HepG2 (cell line): ENCODE measurements at regions of chr1 and their contacts with region 1.

Region 1: DNA sequence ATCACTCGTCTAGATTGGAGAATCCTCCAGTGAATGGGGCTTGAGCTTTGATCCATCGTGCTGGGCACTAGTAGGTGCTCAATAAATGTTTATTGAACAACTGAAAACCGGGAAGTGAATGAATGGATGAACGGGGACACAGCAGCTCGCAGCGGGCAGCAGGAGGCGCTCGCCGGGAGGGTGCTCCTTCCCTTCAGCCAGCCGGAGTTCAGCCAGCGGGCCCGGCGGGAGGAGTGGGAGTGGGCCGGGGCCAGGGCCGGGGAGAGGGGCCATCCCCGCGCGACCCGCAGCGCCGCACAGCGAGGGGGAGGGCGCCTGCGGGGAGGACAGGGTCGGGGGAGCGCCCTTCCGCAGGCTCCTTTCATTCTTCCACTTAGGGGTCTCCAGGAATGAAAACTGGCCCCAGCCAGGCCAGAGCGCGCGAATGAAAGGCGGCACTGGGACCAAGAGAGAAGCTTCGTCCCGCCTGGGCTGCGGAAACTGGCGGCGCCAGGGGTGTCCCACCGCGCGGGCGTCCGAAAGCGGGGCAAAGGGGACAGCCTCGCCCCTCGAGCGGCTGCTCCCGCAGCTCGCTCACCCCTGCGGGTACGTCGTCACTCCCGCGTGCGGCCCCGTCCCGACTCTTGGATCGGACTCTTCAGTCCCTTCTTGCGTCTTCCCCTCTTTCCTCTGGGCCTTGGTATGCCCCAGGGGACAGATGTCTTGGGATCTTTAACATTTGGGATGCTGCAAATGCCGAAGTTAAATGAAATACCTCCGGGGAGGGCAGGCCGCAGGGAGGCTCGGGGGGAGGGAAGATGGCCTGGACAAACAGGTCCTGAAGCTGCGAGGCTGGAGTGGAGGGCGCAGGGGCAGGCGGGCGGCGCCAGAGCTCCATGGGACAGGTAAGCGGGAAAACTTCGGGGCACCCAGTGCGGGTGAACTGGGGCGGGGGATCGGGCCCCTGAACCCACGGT is 3.6 kb upstream of the INAVA start:
- DNase-seq: peak; percentile 68
- ATAC-seq: peak; percentile 60
- H3K4me3 ChIP-seq: peak overlapping the region; percentile 68 to 82 (median 70)
- H3K27ac ChIP-seq: peak overlapping the region; percentile 92
- H3K4me1 ChIP-seq: peaks cover 91% of the 10 kb centered on the region
- H3K27me3 ChIP-seq: no peaks in the 10 kb centered on the region
- CTCF ChIP-seq: peak; percentile 78
- EP300 ChIP-seq: no peak; a peak in 1 of 4 replicates
- POLR2A ChIP-seq: peak; percentile 16 to 56; a peak in 2 of 4 replicates
- RAD21 ChIP-seq: peak; percentile 68

Region 2: DNA sequence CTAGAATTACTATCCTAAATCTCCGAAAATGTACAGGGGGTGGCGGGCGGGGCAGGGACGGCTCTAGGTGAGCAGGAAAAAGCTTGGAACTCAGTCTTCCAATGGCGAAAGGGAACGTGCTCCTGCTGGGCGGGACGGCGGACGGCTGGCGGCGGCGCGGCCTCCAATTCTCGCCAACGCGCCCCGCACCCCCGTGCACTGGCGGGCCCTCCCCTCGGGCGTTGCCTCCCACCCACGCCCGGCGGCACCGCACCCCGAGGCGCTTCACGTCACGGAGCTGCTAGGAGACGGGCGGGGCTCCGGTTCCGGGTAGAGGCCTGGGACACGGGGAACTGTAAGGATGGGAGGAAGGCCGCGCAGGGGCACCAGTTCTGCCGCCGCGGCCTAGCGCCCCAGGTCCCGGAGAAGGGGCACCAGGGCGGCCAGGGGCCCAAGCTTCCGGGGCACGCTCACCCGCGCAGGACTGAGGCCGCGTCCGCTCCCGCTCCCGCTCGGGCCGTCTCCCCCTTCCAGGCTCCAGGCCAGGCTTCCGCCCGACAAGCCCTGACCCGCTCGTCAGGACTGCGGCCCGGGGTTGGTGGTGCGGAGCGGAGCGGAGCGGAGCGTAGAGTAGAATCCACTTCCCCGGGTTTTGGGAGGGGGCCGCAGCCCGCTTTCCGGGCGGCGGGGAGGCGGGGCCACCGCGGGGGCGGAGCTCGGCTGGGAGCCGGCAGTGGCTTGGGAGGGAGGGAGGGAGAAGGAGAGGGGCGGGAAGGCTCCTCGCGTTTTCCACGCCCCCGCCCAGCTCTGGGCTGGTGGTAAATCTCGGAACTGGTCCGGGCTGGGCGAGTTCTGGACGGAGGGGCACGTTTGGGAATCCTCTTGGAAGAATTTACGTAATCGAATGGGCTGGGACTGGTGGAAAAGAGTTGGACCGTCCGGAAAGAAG is 221.5 kb before region 1 on chr1 and contains the start of gene DDX59:
- CTCF ChIA-PET with region 1: no interaction called
- POLR2A ChIA-PET with region 1: interaction called, 15 read pairs
- in situ Hi-C with region 1: no loop called
- intact Hi-C with region 1: no loop called
- DNase-seq: peak; percentile 94
- ATAC-seq: peak; percentile 93
- H3K4me3 ChIP-seq: peak within 1 kb of the TSS; percentile 86 to 94 (median 87)
- H3K27ac ChIP-seq: peak within 1 kb of the TSS; percentile 98
- H3K4me1 ChIP-seq: peaks cover 18% of the 10 kb centered on the region
- H3K27me3 ChIP-seq: no peaks in the 10 kb centered on the region
- CTCF ChIP-seq: no peak
- EP300 ChIP-seq: peak in 1 of 2 experiments; percentile 24; a peak in 1 of 4 replicates
- POLR2A ChIP-seq: peak; percentile 46 to 85; a peak in 3 of 4 replicates
- RAD21 ChIP-seq: peak; percentile 21; the same call in 1 of the 2 replicates
- total RNA-seq, gene DDX59: 14.8 and 21.7 TPM in 2 replicates

Region 3: GRCh38 chr1:200917291-200917817 is 26.3 kb after region 1 on chr1:
- CTCF ChIA-PET with region 1: no interaction called
- POLR2A ChIA-PET with region 1: interaction called, 10 read pairs
- in situ Hi-C with region 1: no loop called
- intact Hi-C with region 1: no loop called
- DNase-seq: peak; percentile 67
- ATAC-seq: peak; percentile 88
- H3K4me3 ChIP-seq: peak overlapping the region in 1 of 3 experiments; percentile 41; a peak in 2 of 6 replicates
- H3K27ac ChIP-seq: no peak overlapping the region
- H3K4me1 ChIP-seq: peaks cover 27% of the 10 kb centered on the region
- H3K27me3 ChIP-seq: no peaks in the 10 kb centered on the region
- CTCF ChIP-seq: peak; percentile 22; the same call in 1 of the 2 replicates
- EP300 ChIP-seq: no peak
- POLR2A ChIP-seq: no peak
- RAD21 ChIP-seq: no peak; the same call in 1 of the 2 replicates

Region 4: DNA sequence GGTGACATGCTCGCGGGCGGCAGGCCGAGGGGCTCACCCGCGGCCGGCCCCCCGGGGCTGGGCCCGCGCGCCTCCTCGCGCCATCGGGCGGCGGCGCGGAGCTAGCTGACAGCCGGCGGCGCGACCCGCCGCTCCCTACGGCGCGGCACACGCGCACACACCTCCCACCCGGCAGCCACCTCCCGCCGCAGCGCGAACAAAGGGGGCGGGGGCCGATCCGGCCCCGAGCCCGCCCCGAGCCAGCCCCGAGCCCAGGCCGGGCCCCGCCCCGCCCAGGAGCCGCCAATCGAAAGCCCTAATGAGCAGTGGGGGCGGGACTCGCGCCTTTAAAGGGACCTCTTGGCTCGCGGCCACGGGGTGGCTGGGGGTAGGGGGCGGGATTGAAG is 132.4 kb after region 1 on chr1 and contains the start of gene KIF21B:
- CTCF ChIA-PET with region 1: no interaction called
- POLR2A ChIA-PET with region 1: interaction called, 3 read pairs
- in situ Hi-C with region 1: no loop called
- intact Hi-C with region 1: loop called (anchors 5 kb)
- DNase-seq: peak; percentile 42
- ATAC-seq: peak; percentile 86
- H3K4me3 ChIP-seq: peak within 1 kb of the TSS; percentile 40 to 68 (median 55); a peak in 5 of 6 replicates
- H3K27ac ChIP-seq: no peak within 1 kb of the TSS
- H3K4me1 ChIP-seq: peaks cover 56% of the 10 kb centered on the region
- H3K27me3 ChIP-seq: peaks cover 7 to 39% of the 10 kb centered on the region in 2 experiments; a peak in 4 of 5 replicates
- CTCF ChIP-seq: no peak
- EP300 ChIP-seq: no peak
- POLR2A ChIP-seq: no peak
- RAD21 ChIP-seq: no peak
- total RNA-seq, gene KIF21B: 0.13 and 0.20 TPM in 2 replicates

Region 5: DNA sequence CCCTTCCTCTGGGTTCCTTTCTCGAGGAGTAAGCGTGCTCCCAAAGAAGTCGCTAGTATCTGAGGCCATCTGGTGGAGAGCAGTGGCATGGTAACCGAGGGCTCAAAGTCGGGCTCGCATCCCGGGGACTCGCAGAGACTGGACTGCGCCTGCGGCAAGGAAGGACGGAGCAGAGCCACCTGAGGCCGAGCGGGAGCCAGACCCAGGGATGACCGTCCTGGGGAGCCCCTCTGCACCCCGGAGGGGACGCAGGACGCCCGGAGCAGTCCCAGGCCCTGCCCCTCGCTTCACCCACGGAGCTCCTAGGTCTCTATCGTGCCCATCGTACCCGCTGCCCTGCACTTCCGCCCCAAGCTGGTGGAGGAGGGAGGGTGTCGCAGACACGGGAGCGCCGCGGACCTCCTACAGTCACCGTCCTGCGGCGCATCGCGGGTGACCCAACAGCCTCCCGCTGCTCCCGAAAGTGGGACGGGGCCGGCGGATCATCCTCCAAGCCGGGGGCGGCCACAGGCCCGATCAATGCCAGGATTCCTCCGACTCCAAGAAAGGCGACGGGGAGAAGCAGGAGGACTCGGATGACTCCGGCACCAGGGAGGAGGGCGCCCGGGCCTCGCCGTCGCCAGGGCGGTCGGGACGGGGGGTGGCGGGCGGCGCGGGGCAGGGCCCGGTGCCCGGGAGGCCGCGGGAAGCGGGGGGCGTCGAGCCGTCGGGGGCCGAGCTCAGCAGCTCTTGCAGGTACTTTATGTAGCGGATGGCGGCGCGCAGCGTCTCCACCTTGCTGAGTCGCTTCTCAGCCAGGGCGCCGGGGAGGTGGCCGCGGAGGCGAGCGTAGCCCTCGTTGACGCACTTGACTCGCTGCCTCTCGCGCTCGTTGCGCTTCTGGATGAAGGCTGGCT is 223.4 kb after region 1 on chr1:
- CTCF ChIA-PET with region 1: no interaction called
- POLR2A ChIA-PET with region 1: no interaction called
- in situ Hi-C with region 1: no loop called
- intact Hi-C with region 1: loop called (anchors 10 kb)
- DNase-seq: peak; percentile 70
- ATAC-seq: peak; percentile 97
- H3K4me3 ChIP-seq: peak overlapping the region in 2 of 3 experiments; percentile 48 to 74; a peak in 4 of 6 replicates
- H3K27ac ChIP-seq: no peak overlapping the region
- H3K4me1 ChIP-seq: no peaks in the 10 kb centered on the region
- H3K27me3 ChIP-seq: peaks cover 0 to 21% of the 10 kb centered on the region in 2 experiments; a peak in 3 of 5 replicates
- CTCF ChIP-seq: peak; percentile 95
- EP300 ChIP-seq: no peak
- POLR2A ChIP-seq: no peak
- RAD21 ChIP-seq: peak; percentile 90

Region 6: GRCh38 chr1:201229771-201230635 is 338.9 kb after region 1 on chr1:
- CTCF ChIA-PET with region 1: no interaction called
- POLR2A ChIA-PET with region 1: no interaction called
- in situ Hi-C with region 1: no loop called
- intact Hi-C with region 1: no loop called
- DNase-seq: no peak
- ATAC-seq: peak; percentile 35; the same call in 1 of the 3 replicates
- H3K4me3 ChIP-seq: no peak overlapping the region
- H3K27ac ChIP-seq: no peak overlapping the region
- H3K4me1 ChIP-seq: no peaks in the 10 kb centered on the region
- H3K27me3 ChIP-seq: peaks cover 8 to 34% of the 10 kb centered on the region in 2 experiments; a peak in 4 of 5 replicates
- CTCF ChIP-seq: peak; percentile 27; the same call in 1 of the 2 replicates
- EP300 ChIP-seq: no peak
- POLR2A ChIP-seq: no peak
- RAD21 ChIP-seq: no peak